GM13976 (cell line): ENCODE measurements at regions of chr3 and their contacts with region 1.

Region 1: DNA sequence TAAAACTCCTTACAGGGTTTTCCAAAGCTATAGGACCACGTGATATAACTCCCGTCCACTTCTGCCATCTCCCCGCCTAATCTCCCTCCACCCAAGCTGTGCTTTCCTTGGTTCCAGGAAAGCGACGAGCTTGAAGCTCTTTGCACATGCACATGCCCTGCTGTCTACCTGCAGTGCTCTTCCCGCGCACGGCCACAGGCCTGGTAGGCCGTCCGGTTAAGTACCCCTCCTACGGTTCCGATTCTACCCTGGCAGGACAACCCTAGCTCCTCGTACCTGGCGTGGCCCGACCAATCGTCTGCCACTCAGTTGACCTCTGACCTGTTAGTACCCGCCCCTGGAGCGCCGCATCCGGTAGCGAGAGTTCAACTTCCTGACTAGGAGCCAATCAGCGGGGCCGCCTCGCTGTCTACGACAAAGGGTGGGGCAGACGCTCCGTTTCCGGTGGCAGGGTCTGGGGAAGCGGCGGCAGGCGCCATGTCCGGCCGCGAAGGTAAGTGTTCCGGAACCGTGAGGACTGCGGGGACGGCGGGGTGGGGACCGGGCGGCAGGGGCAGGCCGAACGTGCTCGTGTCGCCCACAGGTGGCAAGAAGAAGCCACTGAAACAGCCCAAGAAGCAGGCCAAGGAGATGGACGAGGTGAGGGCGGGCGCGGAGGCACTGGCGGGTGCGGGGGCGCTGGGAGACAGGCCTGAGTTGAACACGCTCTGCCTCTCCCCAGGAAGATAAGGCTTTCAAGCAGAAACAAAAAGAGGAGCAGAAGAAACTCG is at the starts of genes CCDC51 and TMA7:
- DNase-seq: peak; percentile 99
- CTCF ChIP-seq: no peak

Region 2: DNA sequence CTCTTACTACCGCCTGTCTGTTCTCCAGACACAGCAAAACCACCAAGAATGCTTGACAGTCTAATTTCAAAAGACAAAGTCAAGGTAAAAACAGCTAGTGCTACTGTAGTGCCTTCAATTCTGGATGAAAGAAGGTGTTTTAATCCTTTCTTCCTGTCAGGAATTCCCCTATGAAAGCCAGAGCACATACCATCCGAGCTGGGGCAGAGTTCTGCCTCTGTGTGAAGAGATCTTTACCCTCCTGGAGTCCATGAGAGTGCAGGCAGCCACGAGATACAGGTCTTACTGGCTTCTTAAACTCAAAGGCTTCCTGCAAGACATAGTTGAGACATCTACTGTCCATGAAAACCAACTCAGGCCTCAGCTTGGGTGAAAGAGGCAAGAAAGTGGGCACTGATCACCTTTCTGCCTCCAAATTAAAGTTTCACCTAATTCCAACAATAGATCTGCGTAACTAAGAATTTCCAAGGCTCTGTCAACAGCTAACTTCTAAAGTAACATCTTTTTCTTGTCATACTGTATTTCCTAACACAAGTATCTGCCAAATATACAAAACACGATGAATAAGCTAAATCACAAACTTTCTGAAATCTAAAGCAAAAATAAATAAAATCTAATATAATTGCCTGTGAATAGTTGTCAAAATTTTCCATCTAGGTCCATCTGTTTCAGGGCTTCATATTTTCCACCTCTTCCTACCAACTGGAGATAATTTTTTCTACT is 259.3 kb before region 1 on chr3:
- in situ Hi-C with region 1: no loop called
- DNase-seq: no peak
- CTCF ChIP-seq: no peak

Region 3: GRCh38 chr3:48273594-48274211 is 166.3 kb before region 1 on chr3:
- in situ Hi-C with region 1: loop called (anchors 10 kb)
- DNase-seq: peak; percentile 80
- CTCF ChIP-seq: peak; percentile 63

Region 4: GRCh38 chr3:48528754-48529153 is 88.7 kb after region 1 on chr3:
- in situ Hi-C with region 1: no loop called
- DNase-seq: no peak
- CTCF ChIP-seq: no peak

Region 5: GRCh38 chr3:48697952-48698351 is 257.9 kb after region 1 on chr3:
- in situ Hi-C with region 1: no loop called
- DNase-seq: no peak
- CTCF ChIP-seq: no peak

Region 6: GRCh38 chr3:49140080-49140479 is 700.1 kb after region 1 on chr3:
- in situ Hi-C with region 1: no loop called
- DNase-seq: no peak
- CTCF ChIP-seq: no peak